ENCODE measurements at regions of chr3 and their contacts with region 1.

Region 1: DNA sequence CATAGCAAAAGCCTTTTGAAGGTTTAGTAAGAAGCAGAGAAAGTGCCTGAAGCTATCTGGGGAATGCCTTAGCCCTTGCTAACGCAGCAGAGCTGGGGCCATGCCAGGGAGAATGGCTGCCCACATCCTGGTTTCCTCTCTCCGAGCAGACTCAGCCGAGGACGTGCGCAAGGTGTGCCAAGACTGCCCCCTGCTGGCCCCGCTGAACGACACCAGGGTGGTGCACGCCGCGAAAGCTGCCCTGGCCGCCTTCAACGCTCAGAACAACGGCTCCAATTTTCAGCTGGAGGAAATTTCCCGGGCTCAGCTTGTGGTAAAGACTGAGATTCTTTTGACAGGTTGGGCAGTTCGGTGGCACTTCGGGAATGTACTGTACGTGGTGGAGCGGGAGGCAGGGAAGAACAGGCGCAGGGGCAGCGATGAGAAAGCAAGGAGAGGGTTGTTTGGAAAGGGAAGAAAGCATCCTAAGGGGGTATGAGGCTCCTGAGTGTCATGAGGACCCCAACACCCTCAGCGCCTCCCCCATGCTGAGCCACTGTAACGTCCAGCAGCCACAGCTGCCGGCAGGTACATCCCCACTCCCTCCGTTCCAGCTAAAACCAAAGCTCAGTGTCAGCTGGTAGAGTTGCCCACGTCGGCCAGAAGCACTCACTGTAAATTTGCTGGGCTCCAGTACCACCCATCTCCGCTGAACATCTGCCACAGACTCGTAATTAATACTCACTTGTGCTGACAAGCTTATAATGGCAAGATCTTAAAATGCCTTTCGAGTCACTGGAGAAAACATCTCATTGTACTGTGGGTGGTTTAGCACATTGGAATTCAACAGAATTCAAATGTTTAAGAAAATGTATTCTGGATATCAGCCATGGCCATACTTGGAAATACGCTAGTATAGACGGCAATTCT is 4.4 kb downstream of the AHSG start:
- DNase-seq: peak; percentile 99
- ATAC-seq: peak; percentile 98
- H3K4me3 ChIP-seq: peak overlapping the region; percentile 54
- H3K27ac ChIP-seq: 0 out of 2 replicates have a peak overlapping the region, but pooled peaks have one; percentile 35
- H3K4me1 ChIP-seq: peaks cover 16% of the 10 kb centered on the region
- H3K27me3 ChIP-seq: no peaks in the 10 kb centered on the region
- CTCF ChIP-seq: peak; percentile 96

Region 2: GRCh38 chr3:186259612-186260383 is 357.5 kb before region 1 on chr3:
- CTCF ChIA-PET with region 1: no interaction called
- POLR2A ChIA-PET with region 1: no interaction called
- intact Hi-C with region 1: loop called (anchors 1 kb)
- DNase-seq: peak; percentile 92
- ATAC-seq: peak; percentile 100
- H3K4me3 ChIP-seq: peak overlapping the region; percentile 50
- H3K27ac ChIP-seq: no peak overlapping the region
- H3K4me1 ChIP-seq: peaks cover 14% of the 10 kb centered on the region
- H3K27me3 ChIP-seq: no peaks in the 10 kb centered on the region
- CTCF ChIP-seq: peak; percentile 96

Region 3: DNA sequence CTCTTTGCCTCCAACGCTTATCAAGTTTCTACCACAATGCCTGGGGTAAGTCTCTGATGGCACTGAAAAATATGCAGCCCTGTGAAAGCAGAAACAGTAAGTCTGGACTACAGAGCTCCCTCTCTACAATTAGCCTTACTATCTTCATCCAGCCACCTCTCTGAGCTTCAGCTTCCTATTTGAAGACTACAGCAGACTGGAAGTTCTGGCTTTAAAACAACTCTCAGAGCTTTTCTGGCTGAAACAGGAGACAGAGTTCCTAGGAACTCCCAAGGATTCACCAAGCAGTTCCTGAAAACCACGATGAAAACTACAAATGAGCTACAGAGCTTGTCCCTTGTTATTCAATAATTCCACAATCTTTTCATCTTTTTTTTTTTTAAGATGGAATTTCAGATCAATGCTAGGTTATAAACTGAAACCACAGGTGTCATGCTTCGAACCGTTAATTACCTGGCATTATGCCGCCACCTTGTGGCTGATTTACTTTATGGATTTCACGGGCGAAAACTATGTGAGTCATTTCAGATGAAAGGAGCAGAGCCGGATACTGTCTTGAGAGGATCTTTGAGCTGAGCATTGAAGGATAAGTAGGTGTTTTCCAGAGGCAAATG is 77.0 kb before region 1 on chr3:
- CTCF ChIA-PET with region 1: interaction called, 9 read pairs
- POLR2A ChIA-PET with region 1: no interaction called
- intact Hi-C with region 1: loop called (anchors 2 kb)
- DNase-seq: peak; percentile 95
- ATAC-seq: peak; percentile 76
- H3K4me3 ChIP-seq: no peak overlapping the region
- H3K27ac ChIP-seq: peak overlapping the region; percentile 57
- H3K4me1 ChIP-seq: peaks cover 33% of the 10 kb centered on the region
- H3K27me3 ChIP-seq: no peaks in the 10 kb centered on the region
- CTCF ChIP-seq: peak; percentile 95

Region 4: DNA sequence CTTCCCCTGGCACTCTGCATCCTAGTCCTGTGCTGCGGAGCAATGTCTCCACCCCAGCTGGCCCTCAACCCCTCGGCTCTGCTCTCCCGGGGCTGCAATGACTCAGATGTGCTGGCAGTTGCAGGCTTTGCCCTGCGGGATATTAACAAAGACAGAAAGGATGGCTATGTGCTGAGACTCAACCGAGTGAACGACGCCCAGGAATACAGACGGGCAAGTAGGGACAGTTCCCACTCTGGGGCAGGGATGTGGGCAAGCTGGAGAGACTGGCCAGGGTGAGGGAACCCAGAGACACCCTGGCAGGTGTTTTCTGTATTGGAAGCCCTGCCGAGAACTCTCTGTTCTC is 23.2 kb after region 1 on chr3:
- CTCF ChIA-PET with region 1: no interaction called
- POLR2A ChIA-PET with region 1: no interaction called
- intact Hi-C with region 1: no loop called
- DNase-seq: peak; percentile 64
- ATAC-seq: peak; percentile 40; the same call in 1 of the 2 replicates
- H3K4me3 ChIP-seq: no peak overlapping the region
- H3K27ac ChIP-seq: no peak overlapping the region
- H3K4me1 ChIP-seq: peaks cover 18% of the 10 kb centered on the region
- H3K27me3 ChIP-seq: no peaks in the 10 kb centered on the region
- CTCF ChIP-seq: no peak

Region 5: DNA sequence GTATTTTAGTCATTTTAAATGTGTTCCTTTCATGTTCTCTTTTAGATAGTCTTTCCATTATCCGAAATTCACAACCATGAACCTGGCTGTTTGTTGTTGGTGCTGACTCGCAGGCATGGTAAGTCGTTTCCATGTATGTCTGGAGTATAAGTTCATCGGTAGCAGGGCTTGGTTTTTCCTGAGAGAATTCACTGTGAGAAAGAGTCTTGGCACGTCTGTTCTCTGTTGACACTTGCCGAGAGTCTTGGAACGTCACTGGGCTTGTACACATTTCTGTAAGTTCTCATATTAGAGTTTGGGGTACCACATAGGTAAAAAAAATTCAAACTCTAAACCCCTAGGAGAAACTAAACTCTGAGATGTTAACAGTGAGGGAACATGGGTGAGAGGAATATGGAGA is 136.7 kb after region 1 on chr3:
- CTCF ChIA-PET with region 1: interaction called, 3 read pairs
- POLR2A ChIA-PET with region 1: no interaction called
- intact Hi-C with region 1: loop called (anchors 1 kb)
- DNase-seq: no peak
- ATAC-seq: no peak
- H3K4me3 ChIP-seq: 0 out of 2 replicates have a peak overlapping the region, but pooled peaks have one; percentile 47
- H3K27ac ChIP-seq: peak overlapping the region; percentile 88
- H3K4me1 ChIP-seq: peaks cover 17% of the 10 kb centered on the region
- H3K27me3 ChIP-seq: no peaks in the 10 kb centered on the region
- CTCF ChIP-seq: no peak

Region 6: DNA sequence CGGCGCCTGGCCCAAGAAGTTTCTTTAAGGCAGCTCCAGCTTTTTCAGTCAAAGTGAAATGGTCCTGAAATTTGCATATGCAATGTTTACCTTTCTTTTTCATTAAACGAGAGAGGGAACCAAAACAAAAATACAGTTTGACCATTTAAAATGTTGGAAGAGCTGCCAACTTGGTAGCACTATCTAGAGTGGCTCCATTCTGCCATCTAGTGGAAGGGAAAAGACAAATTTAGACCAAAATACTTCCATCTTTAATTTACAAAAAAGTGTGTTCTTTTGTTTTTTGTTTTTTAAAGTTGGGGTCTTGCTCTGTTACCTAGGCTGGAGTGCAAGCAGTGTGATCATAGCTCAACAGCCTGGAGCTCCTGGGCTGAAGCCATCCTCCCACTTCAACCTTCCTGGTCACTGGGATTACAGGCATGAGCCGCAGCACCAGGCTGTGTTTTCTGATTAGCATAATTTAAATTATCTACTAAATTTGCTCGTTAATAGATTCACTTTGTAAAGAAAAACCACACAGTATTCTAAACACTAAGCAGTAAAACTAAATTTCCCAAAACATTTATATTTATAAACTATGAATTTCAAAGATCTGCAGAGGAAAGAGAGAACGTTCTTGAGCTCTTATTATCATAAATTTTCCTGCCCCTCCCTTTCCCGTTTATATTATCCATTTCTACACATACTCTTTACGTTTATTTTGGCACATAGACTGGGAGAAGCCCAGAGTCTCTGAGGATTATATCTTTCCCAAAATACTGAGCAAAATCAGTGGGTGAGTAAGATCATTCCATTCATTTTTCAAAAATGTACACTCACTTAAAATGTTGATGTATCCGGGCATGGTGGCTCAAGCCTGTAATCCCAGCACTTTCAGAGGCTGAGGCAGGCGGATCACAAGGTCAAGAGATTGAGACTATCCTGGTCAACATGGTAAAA is 204.4 kb after region 1 on chr3:
- CTCF ChIA-PET with region 1: interaction called, 11 read pairs
- POLR2A ChIA-PET with region 1: no interaction called
- intact Hi-C with region 1: loop called (anchors 1 kb)
- DNase-seq: peak; percentile 80
- ATAC-seq: peak; percentile 50
- H3K4me3 ChIP-seq: no peak overlapping the region
- H3K27ac ChIP-seq: no peak overlapping the region
- H3K4me1 ChIP-seq: peaks cover 9% of the 10 kb centered on the region; the same call in 1 of the 2 replicates
- H3K27me3 ChIP-seq: no peaks in the 10 kb centered on the region
- CTCF ChIP-seq: peak; percentile 84

Region 7: GRCh38 chr3:186839874-186840641 is 222.8 kb after region 1 on chr3:
- CTCF ChIA-PET with region 1: no interaction called
- POLR2A ChIA-PET with region 1: no interaction called
- intact Hi-C with region 1: no loop called
- DNase-seq: peak; percentile 33
- ATAC-seq: no peak
- H3K4me3 ChIP-seq: no peak overlapping the region
- H3K27ac ChIP-seq: no peak overlapping the region
- H3K4me1 ChIP-seq: no peaks in the 10 kb centered on the region
- H3K27me3 ChIP-seq: no peaks in the 10 kb centered on the region
- CTCF ChIP-seq: no peak

Measured in PC-3 (cell line).